Caco-2 (cell line): ENCODE measurements at regions of chr17 and their contacts with region 1.

Region 1: GRCh38 chr17:17836250-17836817 is 452 bp downstream of the SREBF1 start:
- DNase-seq: peak; percentile 98 to 99
- H3K4me3 ChIP-seq: peak overlapping the region; percentile 98
- H3K4me3 Mint-ChIP-seq: peak overlapping the region; percentile 82
- H3K27ac Mint-ChIP-seq: peak overlapping the region; percentile 98
- H3K4me1 ChIP-seq: peaks cover 46% of the 10 kb centered on the region
- H3K4me1 Mint-ChIP-seq: peaks cover 38% of the 10 kb centered on the region
- H3K27me3 ChIP-seq: no peaks in the 10 kb centered on the region
- H3K27me3 Mint-ChIP-seq: no peaks in the 10 kb centered on the region
- CTCF ChIP-seq: no peak

Region 2: GRCh38 chr17:17752089-17752820 is 84.1 kb before region 1 on chr17:
- CTCF ChIA-PET with region 1: no interaction called
- POLR2A ChIA-PET with region 1: no interaction called
- intact Hi-C with region 1: no loop called
- DNase-seq: peak; percentile 88 to 90
- H3K4me3 ChIP-seq: peak overlapping the region; percentile 32
- H3K4me3 Mint-ChIP-seq: peak overlapping the region; percentile 62
- H3K27ac Mint-ChIP-seq: peak overlapping the region; percentile 83
- H3K4me1 ChIP-seq: peaks cover 9% of the 10 kb centered on the region; the same call in 1 of the 2 replicates
- H3K4me1 Mint-ChIP-seq: no peaks in the 10 kb centered on the region
- H3K27me3 ChIP-seq: no peaks in the 10 kb centered on the region
- H3K27me3 Mint-ChIP-seq: no peaks in the 10 kb centered on the region
- CTCF ChIP-seq: peak in 1 of 2 experiments; percentile 7

Region 3: GRCh38 chr17:17823433-17824118 is 12.8 kb before region 1 on chr17:
- CTCF ChIA-PET with region 1: interaction called, 4 read pairs
- POLR2A ChIA-PET with region 1: interaction called, 18 read pairs
- intact Hi-C with region 1: loop called (anchors 1 kb)
- DNase-seq: peak; percentile 92 to 95
- H3K4me3 ChIP-seq: peak overlapping the region; percentile 47
- H3K4me3 Mint-ChIP-seq: peak overlapping the region; percentile 70
- H3K27ac Mint-ChIP-seq: peak overlapping the region; percentile 76
- H3K4me1 ChIP-seq: peaks cover 37% of the 10 kb centered on the region
- H3K4me1 Mint-ChIP-seq: peaks cover 44% of the 10 kb centered on the region
- H3K27me3 ChIP-seq: no peaks in the 10 kb centered on the region
- H3K27me3 Mint-ChIP-seq: no peaks in the 10 kb centered on the region
- CTCF ChIP-seq: no peak

Region 4: DNA sequence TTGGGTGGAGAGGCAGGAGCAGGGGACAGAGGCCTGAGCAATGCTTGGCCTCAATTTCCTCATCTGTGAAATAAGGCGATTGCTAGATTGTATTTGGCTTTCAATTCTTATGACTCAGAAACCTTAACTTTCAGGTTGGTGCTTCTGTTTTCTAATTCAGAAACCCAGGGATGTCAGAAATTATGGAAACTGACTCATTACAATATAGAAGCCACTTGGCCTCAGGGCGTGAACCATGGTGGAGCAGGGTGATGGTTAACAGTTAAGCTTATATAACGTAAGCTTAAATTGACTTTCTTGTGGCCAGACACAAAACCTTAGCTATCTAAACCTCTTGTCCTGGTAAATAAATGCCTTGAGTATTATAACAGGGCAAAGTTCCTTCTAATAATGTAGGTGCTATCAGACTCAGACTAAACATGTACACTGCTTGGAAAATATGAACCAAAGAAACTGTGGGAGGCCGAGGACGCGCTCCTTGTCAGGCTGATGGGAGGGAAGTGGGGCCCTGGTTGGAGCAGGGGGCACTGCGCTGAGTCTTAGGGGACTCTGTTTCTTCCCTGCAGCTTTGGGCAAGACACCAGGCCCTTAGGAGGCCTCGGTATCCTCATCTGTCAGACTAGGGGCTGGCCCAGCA is 17.6 kb after region 1 on chr17:
- CTCF ChIA-PET with region 1: interaction called, 5 read pairs
- POLR2A ChIA-PET with region 1: interaction called, 10 read pairs
- intact Hi-C with region 1: no loop called
- DNase-seq: no peak
- H3K4me3 ChIP-seq: no peak overlapping the region
- H3K4me3 Mint-ChIP-seq: no peak overlapping the region
- H3K27ac Mint-ChIP-seq: peak overlapping the region; percentile 58
- H3K4me1 ChIP-seq: peaks cover 11% of the 10 kb centered on the region; the same call in 1 of the 2 replicates
- H3K4me1 Mint-ChIP-seq: peaks cover 12% of the 10 kb centered on the region
- H3K27me3 ChIP-seq: no peaks in the 10 kb centered on the region
- H3K27me3 Mint-ChIP-seq: no peaks in the 10 kb centered on the region
- CTCF ChIP-seq: no peak